H1 (cell line): ENCODE measurements at regions of chr2 and their contacts with region 1.

Region 1: GRCh38 chr2:135839713-135840112 is 2.7 kb upstream of the LCT start:
- DNase-seq: no peak
- H3K4me3 ChIP-seq: no peak overlapping the region
- H3K27ac ChIP-seq: no peak overlapping the region
- H3K4me1 ChIP-seq: no peaks in the 10 kb centered on the region
- H3K27me3 ChIP-seq: no peaks in the 10 kb centered on the region
- CTCF ChIP-seq: no peak
- EP300 ChIP-seq: no peak
- POLR2A ChIP-seq: no peak
- RAD21 ChIP-seq: no peak

Region 2: DNA sequence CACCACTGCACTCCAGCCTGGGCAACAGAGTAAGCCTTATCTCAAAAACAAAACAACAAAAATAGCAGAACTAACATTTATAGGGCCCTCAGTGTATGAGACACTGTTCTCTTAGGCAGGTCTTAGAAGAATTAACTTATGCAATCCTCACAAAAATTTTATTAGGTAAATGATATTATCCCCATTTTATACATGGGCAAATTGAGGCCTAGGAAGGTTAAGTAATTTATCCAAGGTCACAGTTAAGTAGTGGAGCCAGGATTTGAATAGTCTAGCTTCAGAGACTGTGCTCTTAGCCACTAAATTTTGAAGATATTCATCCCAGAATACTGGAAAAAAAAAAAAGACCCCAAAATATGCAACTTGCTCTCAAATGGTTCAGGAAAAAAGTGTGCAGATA is 13.7 kb after region 1 on chr2:
- CTCF ChIA-PET with region 1: interaction called, 4 read pairs
- POLR2A ChIA-PET with region 1: interaction called, 11 read pairs
- DNase-seq: no peak
- H3K4me3 ChIP-seq: no peak overlapping the region
- H3K27ac ChIP-seq: no peak overlapping the region
- H3K4me1 ChIP-seq: no peaks in the 10 kb centered on the region
- H3K27me3 ChIP-seq: no peaks in the 10 kb centered on the region
- CTCF ChIP-seq: no peak
- EP300 ChIP-seq: no peak
- POLR2A ChIP-seq: no peak
- RAD21 ChIP-seq: no peak

Region 3: DNA sequence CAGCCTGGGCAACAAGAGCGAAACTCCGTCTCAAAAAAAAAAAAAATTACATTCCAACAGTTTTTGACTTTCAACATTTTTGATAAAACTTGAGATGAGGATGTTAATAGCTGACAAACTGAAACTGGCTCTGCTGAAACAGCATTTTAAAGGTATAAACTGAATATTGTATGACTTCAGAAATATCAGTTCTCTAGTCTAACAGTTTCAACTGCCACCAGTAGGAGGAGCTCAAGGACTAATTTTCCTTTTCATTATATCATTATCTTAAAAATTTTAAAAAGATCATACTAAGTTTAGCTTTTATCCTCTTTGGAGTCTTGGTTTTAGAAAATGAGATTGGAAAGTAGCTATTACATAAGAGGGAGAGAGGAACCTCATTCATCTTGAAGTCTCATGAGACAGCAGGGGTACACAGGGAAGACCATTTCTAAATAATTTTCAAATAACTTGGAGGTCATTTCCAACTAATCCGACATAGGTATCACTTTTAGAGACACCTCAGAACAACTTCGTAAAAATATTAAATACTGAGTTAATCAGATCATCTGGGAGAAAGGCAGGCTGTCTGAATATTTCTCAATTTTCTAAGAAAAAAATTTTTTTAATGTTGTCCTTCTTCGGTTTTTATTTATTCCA is 74.1 kb after region 1 on chr2:
- CTCF ChIA-PET with region 1: no interaction called
- POLR2A ChIA-PET with region 1: no interaction called
- DNase-seq: no peak
- H3K4me3 ChIP-seq: no peak overlapping the region
- H3K27ac ChIP-seq: no peak overlapping the region
- H3K4me1 ChIP-seq: no peaks in the 10 kb centered on the region
- H3K27me3 ChIP-seq: no peaks in the 10 kb centered on the region
- CTCF ChIP-seq: peak in 2 of 3 experiments; percentile 36 to 47; a peak in 2 of 4 replicates
- EP300 ChIP-seq: no peak
- POLR2A ChIP-seq: no peak
- RAD21 ChIP-seq: peak; percentile 59 to 75